IMR-90 (cell line): ENCODE measurements at regions of chr4 and their contacts with region 1.

Region 1: DNA sequence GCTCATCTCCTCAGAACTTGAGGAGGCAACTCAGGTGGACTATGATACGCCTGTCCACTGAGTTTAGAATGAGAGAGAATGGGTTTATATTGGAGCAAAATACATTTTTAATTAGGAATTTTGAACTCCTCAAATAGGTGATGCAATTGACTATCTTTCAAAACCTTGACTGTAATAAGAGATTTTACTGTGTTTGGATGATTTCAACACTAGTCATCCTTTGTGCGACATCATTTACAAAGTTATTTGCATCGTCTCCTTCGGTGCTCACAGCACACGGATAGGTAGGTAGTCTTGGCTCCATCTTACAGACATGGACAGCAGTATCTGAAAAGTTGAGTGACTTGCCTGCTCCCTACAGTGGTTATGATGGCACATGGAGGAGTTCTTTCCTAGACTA is 67.0 kb downstream of the AASDH start:
- DNase-seq: peak; percentile 67
- ATAC-seq: peak; percentile 62; the same call in 1 of the 2 replicates
- H3K4me3 ChIP-seq: no peak overlapping the region
- H3K27ac ChIP-seq: peak overlapping the region; percentile 40; the same call in 1 of the 2 replicates
- H3K4me1 ChIP-seq: peaks cover 6% of the 10 kb centered on the region
- H3K27me3 ChIP-seq: no peaks in the 10 kb centered on the region
- CTCF ChIP-seq: no peak
- POLR2A ChIP-seq: no peak
- RAD21 ChIP-seq: no peak

Region 2: DNA sequence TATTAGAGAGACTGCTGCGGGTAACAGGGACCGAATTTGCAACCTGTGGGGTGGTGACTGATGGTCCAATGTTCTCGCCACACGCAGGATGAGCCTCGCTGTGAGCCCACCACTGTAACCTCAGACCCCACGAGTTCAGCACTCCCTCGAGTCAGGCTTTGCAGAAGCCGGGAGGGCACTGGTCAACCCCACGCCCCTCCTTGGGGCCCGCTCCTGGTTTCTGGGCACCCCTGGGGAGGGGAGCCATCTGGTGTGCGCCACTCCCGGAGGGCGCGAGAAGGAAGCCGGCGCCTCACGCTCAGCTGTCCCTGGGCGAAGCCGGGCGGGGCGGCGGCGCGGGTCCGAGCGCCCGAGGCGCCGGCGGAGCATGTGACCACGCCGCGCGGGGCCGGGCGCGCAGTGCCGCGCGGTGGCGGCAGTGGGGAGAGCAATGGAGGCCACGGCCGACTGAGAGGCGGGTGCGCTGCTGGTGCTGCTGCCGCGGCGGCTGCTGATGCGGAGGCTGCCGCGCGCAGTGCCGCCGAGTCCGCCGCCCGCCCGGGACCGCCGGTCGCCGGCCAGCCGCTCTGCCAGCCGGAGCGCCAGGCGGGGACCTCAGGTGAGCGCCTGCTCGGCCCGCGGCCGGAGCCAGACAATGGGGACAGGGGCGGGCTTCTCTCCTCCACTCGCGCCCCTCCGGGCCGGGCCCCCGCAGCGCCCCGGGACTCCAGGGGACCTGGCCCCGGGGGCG is 271.4 kb before region 1 on chr4:
- CTCF ChIA-PET with region 1: interaction called, 11 read pairs
- POLR2A ChIA-PET with region 1: no interaction called
- dilution Hi-C with region 1: no loop called
- in situ Hi-C with region 1: no loop called
- intact Hi-C with region 1: no loop called
- DNase-seq: peak; percentile 39
- ATAC-seq: peak; percentile 99
- H3K4me3 ChIP-seq: peak overlapping the region; percentile 58
- H3K27ac ChIP-seq: no peak overlapping the region
- H3K4me1 ChIP-seq: no peaks in the 10 kb centered on the region
- H3K27me3 ChIP-seq: peaks cover 18% of the 10 kb centered on the region
- CTCF ChIP-seq: peak; percentile 52
- POLR2A ChIP-seq: no peak
- RAD21 ChIP-seq: peak; percentile 36; the same call in 1 of the 2 replicates